Heart right ventricle (tissue), 16 donors: ENCODE measurements at regions of chr16 and their contacts with region 1.

Region 1: GRCh38 chr16:84617791-84618580 is at the start of gene COTL1:
- DNase-seq: peak; percentile 95 to 97
- ATAC-seq: peak; percentile 89 to 95 (median 94)
- H3K4me3 ChIP-seq: peak within 1 kb of the TSS; percentile 52 to 95 (median 72)
- H3K27ac ChIP-seq: peak within 1 kb of the TSS in 9 of 10 donors; percentile 1 to 90 (median 58)
- H3K4me1 ChIP-seq: peaks cover 3 to 65% (median 17%) of the 10 kb centered on the region in 9 donors
- H3K27me3 ChIP-seq: peaks cover 0 to 16% (median 0%) of the 10 kb centered on the region in 7 donors
- CTCF ChIP-seq: no peak
- total RNA-seq, gene COTL1: 6.4 to 72.9 (median 9.7) TPM

Region 2: GRCh38 chr16:84284154-84284722 is 333.7 kb before region 1 on chr16:
- intact Hi-C with region 1: loop called in 1 of 10 experiments (anchors 10 kb)
- DNase-seq: peak; percentile 62 to 73
- ATAC-seq: peak; percentile 71 to 85 (median 80)
- H3K4me3 ChIP-seq: no peak overlapping the region
- H3K27ac ChIP-seq: peak overlapping the region in 9 of 10 donors; percentile 14 to 65 (median 49)
- H3K4me1 ChIP-seq: peaks cover 3 to 36% (median 26%) of the 10 kb centered on the region in 9 donors
- H3K27me3 ChIP-seq: no peaks in the 10 kb centered on the region
- CTCF ChIP-seq: no peak

Region 3: GRCh38 chr16:84511180-84511824 is 106.7 kb before region 1 on chr16:
- intact Hi-C with region 1: loop called (anchors 1 to 5 kb)
- DNase-seq: peak; percentile 83 to 85
- ATAC-seq: peak; percentile 40 to 92 (median 84)
- H3K4me3 ChIP-seq: peak overlapping the region in 2 of 10 donors; percentile 10 to 14
- H3K27ac ChIP-seq: peak overlapping the region in 1 of 10 donors; percentile 87
- H3K4me1 ChIP-seq: peaks cover 0 to 46% (median 3%) of the 10 kb centered on the region in 9 donors
- H3K27me3 ChIP-seq: no peaks in the 10 kb centered on the region
- CTCF ChIP-seq: peak; percentile 94 to 99 (median 97)

Region 4: DNA sequence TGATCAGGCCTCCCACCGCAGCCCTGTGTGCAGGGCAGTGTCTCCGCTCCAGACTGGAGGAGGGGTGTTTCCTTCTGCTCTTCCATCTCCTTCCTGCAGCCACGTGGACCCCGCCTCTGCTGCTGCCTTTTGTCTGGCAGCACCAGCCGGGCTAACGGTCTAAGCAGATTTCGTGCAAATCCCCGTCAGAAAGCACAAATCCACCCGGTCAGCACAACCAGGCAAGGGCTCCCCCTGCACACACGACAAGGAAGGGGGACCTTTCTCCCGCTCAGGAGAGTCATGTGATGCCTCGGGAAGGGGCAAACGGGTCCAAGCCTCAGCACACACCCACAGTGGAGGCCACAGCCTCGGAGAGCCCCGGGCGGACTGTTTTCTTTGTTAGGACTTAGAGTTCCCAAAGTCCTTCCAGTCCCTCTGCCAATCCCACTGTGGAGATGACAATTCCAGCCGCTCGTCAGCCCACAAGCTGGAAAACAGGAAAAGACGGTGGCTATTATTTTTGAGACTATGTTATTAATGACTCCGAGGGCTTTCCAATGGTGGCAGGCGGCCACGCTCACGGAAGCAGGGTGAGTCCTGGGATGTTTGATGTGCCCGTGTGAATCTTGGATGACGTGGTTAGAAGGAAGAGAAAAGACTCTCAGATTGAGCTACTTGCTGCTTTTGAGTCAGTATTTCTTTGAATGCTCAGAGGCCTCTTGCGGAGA is 91.0 kb before region 1 on chr16:
- intact Hi-C with region 1: loop called in 1 of 10 experiments (anchors 5 kb)
- DNase-seq: peak in 1 of 2 donors; percentile 41
- ATAC-seq: peak; percentile 18 to 80 (median 56)
- H3K4me3 ChIP-seq: peak overlapping the region in 6 of 10 donors; percentile 5 to 39 (median 30)
- H3K27ac ChIP-seq: peak overlapping the region; percentile 54 to 83 (median 76)
- H3K4me1 ChIP-seq: peaks cover 9 to 38% (median 31%) of the 10 kb centered on the region in 9 donors
- H3K27me3 ChIP-seq: no peaks in the 10 kb centered on the region
- CTCF ChIP-seq: no peak

Region 5: DNA sequence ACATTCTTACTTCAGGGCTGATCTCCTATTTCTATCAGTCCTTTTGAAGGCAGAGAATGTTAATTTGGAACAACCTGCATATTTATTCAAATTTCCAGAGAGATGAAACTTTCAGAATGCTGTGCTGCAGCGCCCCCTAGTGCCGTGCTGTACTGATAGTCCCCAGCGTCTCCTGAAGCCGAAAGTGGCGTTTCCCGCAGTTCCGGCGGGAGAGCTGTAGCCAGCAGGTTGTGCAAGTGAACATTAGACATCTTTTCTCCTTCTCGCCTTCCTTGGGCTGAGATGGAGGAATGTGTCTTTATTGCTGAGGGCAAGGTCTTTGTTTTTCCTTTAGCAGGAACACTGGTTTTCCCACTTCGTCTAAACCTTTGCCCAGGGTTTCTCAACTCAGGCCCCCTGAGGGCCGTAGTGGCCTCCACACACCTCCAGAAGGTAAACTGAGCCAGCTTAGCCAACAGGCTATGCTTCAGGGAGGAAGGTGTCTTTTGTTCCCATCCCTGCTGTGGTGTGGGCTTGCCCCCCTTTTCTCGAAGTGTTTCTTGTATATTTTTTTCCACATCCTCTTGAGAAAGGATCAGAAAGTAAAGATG is 108.2 kb after region 1 on chr16:
- intact Hi-C with region 1: loop called in 9 of 10 experiments (anchors 2 to 5 kb)
- DNase-seq: peak; percentile 89 to 90
- ATAC-seq: peak; percentile 67 to 89 (median 84)
- H3K4me3 ChIP-seq: peak overlapping the region in 4 of 10 donors; percentile 5 to 38 (median 18)
- H3K27ac ChIP-seq: peak overlapping the region in 4 of 10 donors; percentile 17 to 65 (median 46)
- H3K4me1 ChIP-seq: peaks cover 0 to 79% (median 66%) of the 10 kb centered on the region in 9 donors
- H3K27me3 ChIP-seq: no peaks in the 10 kb centered on the region
- CTCF ChIP-seq: peak; percentile 80 to 97 (median 95)

Region 6: DNA sequence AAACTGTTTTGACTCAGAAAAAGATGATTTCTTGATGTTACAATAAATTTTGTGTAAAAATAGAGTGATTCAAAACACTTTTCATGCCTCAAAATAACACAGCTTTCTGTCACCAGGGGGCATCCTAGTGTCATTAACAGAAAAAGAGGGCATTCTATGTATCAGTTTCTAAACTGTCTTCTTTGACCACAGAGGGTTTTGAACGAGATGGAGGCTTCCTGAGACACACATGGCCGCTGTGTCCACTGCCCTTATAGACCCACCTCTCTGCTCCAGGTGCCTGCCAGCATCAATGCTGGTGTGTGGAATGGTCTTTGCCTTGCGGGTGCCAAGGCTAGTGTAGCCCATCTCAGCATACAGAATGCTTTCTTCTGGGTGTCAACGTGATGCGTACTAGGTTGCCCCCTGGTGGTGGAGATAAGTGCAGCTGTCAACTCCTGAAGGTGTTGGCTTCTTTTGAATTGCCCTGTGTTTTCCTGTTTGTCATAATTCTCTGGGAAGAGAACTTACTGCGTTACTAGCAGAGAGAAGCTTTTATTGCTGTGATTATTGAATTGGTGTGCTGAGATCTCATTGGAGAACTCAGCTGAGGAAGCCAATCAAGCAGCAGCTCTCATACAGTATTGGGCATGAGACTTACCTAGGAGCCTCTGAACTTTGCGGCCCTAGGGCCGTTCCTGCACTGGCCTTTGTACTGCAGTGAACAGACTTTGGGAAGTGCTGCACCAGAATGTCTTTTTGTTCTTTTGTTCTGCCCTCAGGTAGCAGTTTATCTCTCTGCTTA is 120.5 kb after region 1 on chr16:
- intact Hi-C with region 1: loop called in 2 of 10 experiments (anchors 5 kb)
- DNase-seq: peak; percentile 58 to 82
- ATAC-seq: peak; percentile 58 to 80 (median 68)
- H3K4me3 ChIP-seq: no peak overlapping the region
- H3K27ac ChIP-seq: peak overlapping the region in 3 of 10 donors; percentile 4 to 77 (median 12)
- H3K4me1 ChIP-seq: peaks cover 5 to 74% (median 68%) of the 10 kb centered on the region in 9 donors
- H3K27me3 ChIP-seq: no peaks in the 10 kb centered on the region
- CTCF ChIP-seq: peak; percentile 78 to 94 (median 89)

Region 7: DNA sequence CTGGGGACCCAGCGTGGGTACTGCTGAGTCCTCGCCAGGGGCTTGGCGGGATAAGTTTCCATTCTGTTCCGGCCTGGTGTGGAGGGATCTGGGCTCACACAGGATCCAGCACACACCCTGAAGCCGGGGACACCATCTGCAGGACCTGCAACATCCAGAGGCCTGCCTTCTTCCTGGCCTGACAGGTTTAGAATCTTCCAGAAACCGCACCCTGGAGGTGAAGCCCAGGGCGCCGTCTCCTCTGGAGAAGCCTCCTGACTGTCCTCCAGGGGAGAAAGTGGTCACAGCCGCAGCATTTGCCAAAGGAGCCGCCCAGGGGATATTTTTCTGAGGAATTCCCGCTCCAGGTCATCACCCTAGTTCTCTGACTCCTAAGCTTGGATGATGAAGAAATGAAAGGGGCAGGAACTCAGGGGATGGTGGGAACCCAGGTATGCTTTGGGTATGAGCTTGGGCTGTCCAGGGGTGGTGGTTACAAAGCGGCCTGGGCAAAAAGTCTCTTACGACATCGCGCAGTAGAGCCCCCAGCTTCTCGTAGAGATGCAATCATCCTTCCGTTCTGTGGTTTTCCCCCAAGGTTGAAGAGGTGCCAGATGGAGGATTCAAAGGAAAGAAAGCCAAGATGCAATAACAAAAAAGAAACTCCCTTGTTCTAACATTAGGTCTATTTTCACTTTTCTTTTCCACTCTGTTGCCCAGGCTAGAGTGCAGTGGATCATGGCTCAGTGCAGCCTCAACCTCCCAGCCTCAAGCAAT is 192.7 kb after region 1 on chr16:
- intact Hi-C with region 1: no loop called
- DNase-seq: no peak
- ATAC-seq: peak in 1 of 8 donors; percentile 12
- H3K4me3 ChIP-seq: no peak overlapping the region
- H3K27ac ChIP-seq: peak overlapping the region in 1 of 10 donors; percentile 71
- H3K4me1 ChIP-seq: peaks cover 0 to 38% (median 8%) of the 10 kb centered on the region in 9 donors
- H3K27me3 ChIP-seq: peaks cover 0 to 5% (median 0%) of the 10 kb centered on the region in 7 donors
- CTCF ChIP-seq: no peak